Heart right ventricle (tissue), 16 donors: ENCODE measurements at regions of chr1 and their contacts with region 1.

Region 1: DNA sequence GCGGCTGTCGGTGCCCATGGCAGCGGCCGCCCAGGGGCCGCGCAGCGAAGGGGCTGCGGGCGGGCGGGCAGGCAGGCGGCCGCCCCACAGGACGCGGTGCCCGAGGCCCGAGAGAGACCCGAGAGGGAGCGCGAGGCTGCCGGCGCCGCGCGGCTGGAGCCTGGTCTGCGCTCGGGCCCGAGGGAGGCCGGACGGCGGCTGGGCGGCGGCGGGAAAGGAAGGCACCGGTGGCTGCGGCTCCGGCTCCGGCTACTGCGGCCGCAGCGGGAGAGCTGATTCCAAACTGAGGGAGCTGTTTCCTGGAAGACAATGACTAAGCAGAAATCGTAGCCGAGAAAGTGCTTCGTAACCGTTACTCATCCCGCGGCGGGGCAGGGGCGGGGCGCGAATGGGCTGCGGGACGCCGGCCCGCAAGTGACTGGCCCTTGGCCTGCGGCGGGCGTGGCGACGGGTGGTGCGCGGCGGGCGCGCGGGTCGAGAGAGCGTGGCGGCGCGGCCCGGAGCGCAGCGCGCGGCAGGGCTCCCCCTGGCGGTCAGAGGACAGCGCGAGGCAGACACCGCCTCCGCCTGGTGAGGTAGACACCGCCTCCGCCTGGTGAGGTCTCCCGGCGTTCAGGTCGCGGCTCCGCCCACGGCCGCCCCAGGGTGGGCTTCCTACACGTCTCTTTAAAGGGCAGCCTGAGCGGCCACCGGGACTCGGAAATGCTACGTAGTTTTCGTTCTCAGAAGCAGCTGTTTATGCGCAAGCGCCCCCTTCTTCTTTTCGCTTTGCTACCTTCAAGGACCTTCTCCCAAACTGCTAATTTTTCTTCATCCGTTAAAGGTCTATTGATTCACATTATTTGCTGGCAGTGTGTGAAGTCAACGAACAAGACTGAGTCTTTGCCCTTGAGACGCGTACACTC is at the start of gene GCLM:
- DNase-seq: peak; percentile 89 to 95
- ATAC-seq: peak; percentile 96 to 99 (median 98)
- H3K4me3 ChIP-seq: peak within 1 kb of the TSS; percentile 23 to 100 (median 85)
- H3K27ac ChIP-seq: peak within 1 kb of the TSS; percentile 38 to 97 (median 88)
- H3K4me1 ChIP-seq: peaks cover 6 to 40% (median 16%) of the 10 kb centered on the region in 9 donors
- H3K27me3 ChIP-seq: no peaks in the 10 kb centered on the region
- CTCF ChIP-seq: peak; percentile 73 to 99 (median 92)
- total RNA-seq, gene GCLM: 7.6 to 15.5 (median 10.6) TPM

Region 2: DNA sequence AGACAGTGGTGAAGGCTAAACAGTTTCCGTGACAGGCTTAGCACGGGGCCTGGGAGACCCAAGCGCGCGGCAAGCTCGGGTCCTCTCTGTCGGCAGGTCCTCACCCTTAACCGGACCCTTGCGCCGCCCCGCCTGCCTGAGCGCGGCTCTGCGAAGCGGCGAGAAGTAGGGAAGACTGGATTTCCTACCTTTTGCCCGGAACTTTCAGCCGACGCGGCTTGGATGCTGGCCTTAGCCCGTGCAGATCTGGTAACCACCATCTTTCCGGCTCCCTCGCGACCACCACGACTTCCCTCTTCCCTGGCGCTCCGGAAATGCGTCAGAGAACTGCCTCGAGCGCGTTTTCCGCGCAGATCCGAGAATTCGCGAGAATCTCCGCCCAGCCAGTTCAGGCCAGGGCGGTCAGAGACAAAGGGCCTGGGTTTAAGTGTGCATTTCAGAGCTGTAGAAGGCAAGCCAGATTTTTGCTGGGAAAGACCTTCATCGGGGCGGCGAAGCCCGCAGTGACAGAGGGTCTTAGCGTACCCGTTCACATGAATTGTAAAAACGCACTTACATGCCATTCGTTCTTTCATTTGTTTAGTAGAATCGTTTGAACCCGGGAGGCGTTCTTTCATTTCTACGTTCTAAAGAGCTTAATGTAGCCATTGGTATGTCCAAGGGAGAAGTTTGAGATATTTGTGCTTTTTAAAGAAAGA is 30.4 kb before region 1 on chr1 and contains the start of gene DNTTIP2:
- intact Hi-C with region 1: loop called in 1 of 10 experiments (anchors 2 kb)
- DNase-seq: peak; percentile 88 to 95
- ATAC-seq: peak; percentile 96 to 99 (median 99)
- H3K4me3 ChIP-seq: peak within 1 kb of the TSS; percentile 45 to 100 (median 82)
- H3K27ac ChIP-seq: peak within 1 kb of the TSS; percentile 47 to 98 (median 90)
- H3K4me1 ChIP-seq: peaks cover 0 to 36% (median 35%) of the 10 kb centered on the region in 9 donors
- H3K27me3 ChIP-seq: no peaks in the 10 kb centered on the region
- CTCF ChIP-seq: no peak
- total RNA-seq, gene DNTTIP2: 33.9 to 44.3 (median 41.7) TPM